ENCODE measurements at regions of chr13 and their contacts with region 1.

Region 1: DNA sequence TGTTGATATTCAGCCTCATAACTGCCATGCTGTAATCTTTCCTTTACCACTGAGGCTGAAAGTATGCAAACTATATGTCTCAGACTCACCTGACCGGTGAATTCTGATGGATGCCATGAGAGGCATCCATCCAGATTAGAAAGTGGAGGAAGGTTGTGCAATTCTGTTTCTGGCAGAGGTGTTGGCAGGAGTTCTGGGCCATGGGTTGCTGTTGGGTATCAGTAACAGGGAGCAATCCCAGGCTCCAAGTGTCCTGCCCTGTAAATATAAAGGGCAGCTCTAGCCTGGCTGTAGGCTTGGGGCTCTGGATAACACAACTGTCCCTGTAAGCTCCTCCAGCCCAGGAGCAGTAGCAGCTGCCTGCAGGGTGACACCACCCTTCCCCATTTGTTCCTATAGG is 77.4 kb upstream of the ABCC4 start:
- DNase-seq: no peak
- H3K4me3 ChIP-seq: no peak overlapping the region
- H3K27ac ChIP-seq: no peak overlapping the region
- H3K4me1 ChIP-seq: peaks cover 3% of the 10 kb centered on the region
- H3K27me3 ChIP-seq: peaks cover 2 to 6% of the 10 kb centered on the region in 2 experiments
- CTCF ChIP-seq: no peak
- POLR2A ChIP-seq: no peak

Region 2: GRCh38 chr13:95289020-95289444 is 89.6 kb before region 1 on chr13:
- CTCF ChIA-PET with region 1: interaction called, 48 read pairs
- POLR2A ChIA-PET with region 1: no interaction called
- dilution Hi-C with region 1: no loop called
- intact Hi-C with region 1: no loop called
- DNase-seq: peak; percentile 89
- H3K4me3 ChIP-seq: no peak overlapping the region
- H3K27ac ChIP-seq: peak overlapping the region; percentile 78
- H3K4me1 ChIP-seq: peaks cover 11% of the 10 kb centered on the region
- H3K27me3 ChIP-seq: no peaks in the 10 kb centered on the region
- CTCF ChIP-seq: no peak
- POLR2A ChIP-seq: no peak